ENCODE measurements at regions of chr11 and their contacts with region 1.

Region 1: GRCh38 chr11:108222686-108223448 is at the start of gene ATM:
- DNase-seq: peak; percentile 94 to 99 (median 94)
- ATAC-seq: peak; percentile 89
- H3K4me3 ChIP-seq: peak within 1 kb of the TSS; percentile 80
- H3K27ac ChIP-seq: peak within 1 kb of the TSS; percentile 97
- H3K4me1 ChIP-seq: peaks cover 15 to 46% of the 10 kb centered on the region in 2 experiments
- H3K27me3 ChIP-seq: no peaks in the 10 kb centered on the region
- CTCF ChIP-seq: peak; percentile 88 to 98 (median 94)
- EP300 ChIP-seq: no peak; the same call in none of the 2 replicates
- POLR2A ChIP-seq: peak; percentile 72
- RAD21 ChIP-seq: peak; percentile 72 to 79
- polyA plus RNA-seq, gene ATM: 8.3 to 9.0 TPM

Region 2: DNA sequence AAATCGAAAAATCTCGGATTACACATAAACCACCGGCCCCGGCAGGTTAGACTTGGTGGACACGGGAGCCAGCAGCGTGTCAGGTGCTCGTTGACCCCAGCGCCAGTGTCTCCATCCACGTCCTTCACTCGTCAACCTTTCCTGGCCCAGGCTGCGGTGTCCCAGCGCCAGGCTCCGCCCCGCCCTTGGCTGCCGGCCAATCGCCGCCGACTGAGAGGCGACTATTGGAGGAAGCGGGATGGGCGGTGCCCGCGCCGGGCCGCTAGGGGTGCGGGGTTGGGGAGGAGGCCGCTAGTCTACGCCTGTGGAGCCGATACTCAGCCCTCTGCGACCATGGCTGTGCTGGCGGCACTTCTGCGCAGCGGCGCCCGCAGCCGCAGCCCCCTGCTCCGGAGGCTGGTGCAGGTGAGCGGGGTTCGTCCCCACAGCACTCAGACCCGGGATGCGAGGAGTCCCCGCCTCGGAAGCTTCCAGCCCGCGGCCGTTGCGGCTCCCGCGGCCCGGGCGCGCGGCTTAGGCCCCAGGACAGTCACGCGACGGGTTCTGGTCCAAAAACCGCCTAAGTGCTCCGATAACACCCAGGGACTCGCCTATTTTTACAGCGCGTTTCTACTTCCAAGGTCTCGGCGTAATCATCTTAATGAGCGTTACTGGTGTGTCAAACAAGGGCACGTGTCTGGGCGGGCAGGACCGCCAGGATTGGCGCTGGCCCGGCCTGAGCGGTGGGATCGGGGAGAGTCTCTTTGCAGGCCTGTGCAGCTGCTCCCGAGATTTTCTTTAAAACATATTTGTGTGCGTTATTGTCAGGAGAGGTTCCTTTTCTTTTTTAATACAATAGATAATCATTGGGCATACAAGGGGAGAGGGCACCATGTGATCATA is 101.4 kb before region 1 on chr11 and contains the start of gene ACAT1:
- CTCF ChIA-PET with region 1: interaction called, 4 read pairs
- POLR2A ChIA-PET with region 1: no interaction called
- in situ Hi-C with region 1: no loop called
- intact Hi-C with region 1: loop called (anchors 2 kb)
- DNase-seq: peak; percentile 94 to 98 (median 96)
- ATAC-seq: peak; percentile 96
- H3K4me3 ChIP-seq: peak within 1 kb of the TSS; percentile 58
- H3K27ac ChIP-seq: peak within 1 kb of the TSS; percentile 74
- H3K4me1 ChIP-seq: peaks cover 29 to 30% of the 10 kb centered on the region in 2 experiments; a peak in 4 of 5 replicates
- H3K27me3 ChIP-seq: no peaks in the 10 kb centered on the region
- CTCF ChIP-seq: peak; percentile 29 to 34 (median 29); a peak in 3 of 6 replicates
- EP300 ChIP-seq: no peak; the same call in 1 of the 2 replicates
- POLR2A ChIP-seq: peak; percentile 91
- RAD21 ChIP-seq: no peak
- polyA plus RNA-seq, gene ACAT1: 74.0 to 100 TPM

Region 3: GRCh38 chr11:108199446-108200321 is 23.2 kb before region 1 on chr11:
- CTCF ChIA-PET with region 1: no interaction called
- POLR2A ChIA-PET with region 1: no interaction called
- in situ Hi-C with region 1: no loop called
- intact Hi-C with region 1: loop called (anchors 2 kb)
- DNase-seq: peak; percentile 45 to 77 (median 57)
- ATAC-seq: peak; percentile 85
- H3K4me3 ChIP-seq: no peak overlapping the region
- H3K27ac ChIP-seq: peak overlapping the region; percentile 69
- H3K4me1 ChIP-seq: peaks cover 8 to 31% of the 10 kb centered on the region in 2 experiments
- H3K27me3 ChIP-seq: no peaks in the 10 kb centered on the region
- CTCF ChIP-seq: no peak
- EP300 ChIP-seq: peak; percentile 63; the same call in 1 of the 2 replicates
- POLR2A ChIP-seq: no peak
- RAD21 ChIP-seq: no peak

Region 4: DNA sequence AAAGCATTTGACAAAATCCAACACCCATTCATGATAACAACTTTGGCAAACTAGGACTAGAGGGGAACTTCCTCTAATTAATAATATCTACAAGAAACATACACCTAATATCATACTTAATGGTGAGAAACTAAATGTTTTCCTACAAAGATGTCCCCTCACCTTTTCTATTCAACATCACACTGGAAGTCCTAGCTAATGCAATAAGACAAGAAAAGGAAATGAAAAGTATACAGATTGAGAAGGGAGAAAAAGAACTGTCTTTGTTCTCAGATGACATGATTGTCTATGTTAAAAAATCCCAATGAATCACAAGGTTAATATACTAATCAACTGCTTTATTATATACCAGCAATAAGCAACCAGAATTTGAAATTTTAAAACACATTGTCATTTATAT is 192.1 kb after region 1 on chr11:
- CTCF ChIA-PET with region 1: no interaction called
- POLR2A ChIA-PET with region 1: no interaction called
- in situ Hi-C with region 1: no loop called
- intact Hi-C with region 1: loop called (anchors 10 kb)
- DNase-seq: no peak
- ATAC-seq: no peak
- H3K4me3 ChIP-seq: no peak overlapping the region
- H3K27ac ChIP-seq: no peak overlapping the region
- H3K4me1 ChIP-seq: no peaks in the 10 kb centered on the region
- H3K27me3 ChIP-seq: no peaks in the 10 kb centered on the region
- CTCF ChIP-seq: no peak
- EP300 ChIP-seq: no peak
- POLR2A ChIP-seq: no peak
- RAD21 ChIP-seq: no peak

Region 5: GRCh38 chr11:108497317-108498045 is 274.6 kb after region 1 on chr11:
- CTCF ChIA-PET with region 1: no interaction called
- POLR2A ChIA-PET with region 1: no interaction called
- in situ Hi-C with region 1: no loop called
- intact Hi-C with region 1: loop called (anchors 2 kb)
- DNase-seq: peak; percentile 73 to 97 (median 81)
- ATAC-seq: peak; percentile 88
- H3K4me3 ChIP-seq: peak overlapping the region; percentile 59
- H3K27ac ChIP-seq: peak overlapping the region; percentile 97
- H3K4me1 ChIP-seq: peaks cover 17 to 37% of the 10 kb centered on the region in 2 experiments
- H3K27me3 ChIP-seq: no peaks in the 10 kb centered on the region
- CTCF ChIP-seq: no peak
- EP300 ChIP-seq: peak; percentile 59; the same call in 1 of the 2 replicates
- POLR2A ChIP-seq: peak; percentile 95
- RAD21 ChIP-seq: no peak

Region 6: GRCh38 chr11:108568195-108568858 is 345.5 kb after region 1 on chr11:
- CTCF ChIA-PET with region 1: no interaction called
- POLR2A ChIA-PET with region 1: no interaction called
- in situ Hi-C with region 1: no loop called
- intact Hi-C with region 1: no loop called
- DNase-seq: peak in 1 of 4 experiments; percentile 7
- ATAC-seq: no peak
- H3K4me3 ChIP-seq: no peak overlapping the region
- H3K27ac ChIP-seq: no peak overlapping the region
- H3K4me1 ChIP-seq: peaks cover 3 to 4% of the 10 kb centered on the region in 2 experiments; a peak in 1 of 5 replicates
- H3K27me3 ChIP-seq: no peaks in the 10 kb centered on the region
- CTCF ChIP-seq: no peak
- EP300 ChIP-seq: no peak
- POLR2A ChIP-seq: no peak
- RAD21 ChIP-seq: no peak

Region 7: DNA sequence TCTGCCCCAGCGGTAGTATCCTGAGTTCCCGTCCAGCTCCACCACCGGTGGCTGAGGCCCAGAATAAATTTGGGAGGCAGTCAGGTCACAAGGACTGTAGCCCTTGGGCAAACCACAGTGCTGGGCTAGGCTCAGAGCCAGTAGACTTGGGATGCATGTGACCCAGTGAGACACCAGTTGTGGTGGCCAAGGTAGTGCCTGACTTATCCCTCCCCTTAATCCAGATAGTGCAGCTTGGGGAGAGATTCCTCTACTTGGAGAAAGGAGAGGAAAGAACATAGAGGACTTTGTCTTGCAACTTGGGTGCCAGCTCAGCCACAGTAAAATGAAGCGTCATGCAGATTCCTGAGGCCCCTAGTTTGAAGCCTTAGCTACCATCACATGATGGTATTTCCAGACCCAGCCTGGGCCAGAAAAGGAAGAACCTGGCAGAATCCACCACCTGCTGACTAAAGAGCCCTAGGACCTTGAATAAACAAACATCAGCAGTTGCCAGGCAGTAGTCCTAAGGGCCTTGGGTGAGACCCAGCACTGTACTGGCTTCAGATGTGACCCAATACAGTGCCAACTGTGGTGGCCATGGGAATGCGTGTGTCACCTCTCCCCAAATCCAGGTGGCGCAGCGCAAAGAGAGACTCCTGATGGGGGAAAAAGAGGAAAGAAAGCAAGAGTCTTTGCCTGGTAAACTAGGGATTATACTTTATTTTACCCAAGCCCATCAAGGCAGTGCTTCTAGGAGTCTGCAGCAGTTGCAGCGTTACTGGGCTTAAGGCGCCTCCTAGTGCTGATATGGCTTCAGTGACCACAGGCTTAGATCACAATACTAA is 425.0 kb after region 1 on chr11:
- CTCF ChIA-PET with region 1: interaction called, 3 read pairs
- POLR2A ChIA-PET with region 1: no interaction called
- in situ Hi-C with region 1: no loop called
- intact Hi-C with region 1: loop called (anchors 1 kb)
- DNase-seq: peak; percentile 32 to 81 (median 46)
- ATAC-seq: peak; percentile 99
- H3K4me3 ChIP-seq: no peak overlapping the region
- H3K27ac ChIP-seq: no peak overlapping the region
- H3K4me1 ChIP-seq: peaks cover 0 to 2% of the 10 kb centered on the region in 2 experiments; a peak in 2 of 5 replicates
- H3K27me3 ChIP-seq: no peaks in the 10 kb centered on the region
- CTCF ChIP-seq: peak; percentile 83 to 93 (median 88)
- EP300 ChIP-seq: no peak
- POLR2A ChIP-seq: no peak
- RAD21 ChIP-seq: peak; percentile 97 to 99

Measured in K562 (cell line).